ENCODE measurements at regions of chr1 and their contacts with region 1.

Region 1: GRCh38 chr1:26321315-26322041 is 3.7 kb downstream of the CD52 start:
- DNase-seq: peak; percentile 93
- ATAC-seq: peak; percentile 91 to 92

Region 2: DNA sequence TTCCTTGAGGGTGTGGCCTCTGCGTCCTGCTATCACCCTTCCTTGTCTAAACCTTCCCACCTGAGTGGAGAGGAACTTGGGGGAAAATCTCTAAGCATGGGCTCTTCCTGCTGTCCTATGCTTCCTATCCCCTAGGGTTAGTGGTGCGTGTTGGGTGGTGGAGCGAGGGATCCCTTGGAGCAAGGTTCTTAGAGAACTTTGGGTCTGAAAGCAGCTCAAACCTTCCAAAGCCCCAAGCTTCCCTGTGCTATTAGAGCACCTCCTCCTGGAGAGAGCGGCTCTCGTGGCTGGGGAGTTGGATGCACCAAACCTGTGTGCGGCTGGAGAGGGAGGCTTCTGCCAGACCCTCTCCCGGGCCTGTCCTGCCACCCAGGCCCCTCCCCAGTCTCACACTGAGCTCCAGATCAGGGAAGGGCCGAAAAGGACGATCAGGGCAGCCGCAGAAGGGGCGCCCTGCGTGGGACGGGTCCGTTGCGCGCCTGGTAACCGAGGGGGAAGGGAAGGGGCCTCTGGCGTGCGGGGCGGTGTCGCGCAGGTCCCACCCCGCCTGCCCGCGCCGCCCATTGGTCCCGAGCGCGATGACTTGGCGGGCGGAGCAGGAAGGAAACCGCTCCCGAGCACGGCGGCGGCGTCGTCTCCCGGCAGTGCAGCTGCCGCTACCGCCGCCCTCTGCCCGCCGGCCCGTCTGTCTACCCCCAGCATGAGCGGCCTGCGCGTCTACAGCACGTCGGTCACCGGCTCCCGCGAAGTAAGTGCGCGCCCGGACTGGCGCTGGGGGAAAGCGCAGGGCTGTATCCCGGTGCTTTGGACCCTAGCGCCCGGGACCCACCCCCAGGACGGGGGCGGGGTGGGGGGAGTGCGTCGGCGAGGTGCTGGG is 41.8 kb before region 1 on chr1 and contains the start of gene SH3BGRL3:
- intact Hi-C with region 1: loop called (anchors 2 to 10 kb)
- DNase-seq: peak; percentile 93
- ATAC-seq: peak; percentile 76 to 86
- total RNA-seq, gene SH3BGRL3: 90.6 to 93.9 TPM

Region 3: GRCh38 chr1:26284597-26285360 is 36.7 kb before region 1 on chr1:
- intact Hi-C with region 1: loop called (anchors 2 to 10 kb)
- DNase-seq: peak; percentile 91
- ATAC-seq: peak; percentile 36 to 39

Region 4: DNA sequence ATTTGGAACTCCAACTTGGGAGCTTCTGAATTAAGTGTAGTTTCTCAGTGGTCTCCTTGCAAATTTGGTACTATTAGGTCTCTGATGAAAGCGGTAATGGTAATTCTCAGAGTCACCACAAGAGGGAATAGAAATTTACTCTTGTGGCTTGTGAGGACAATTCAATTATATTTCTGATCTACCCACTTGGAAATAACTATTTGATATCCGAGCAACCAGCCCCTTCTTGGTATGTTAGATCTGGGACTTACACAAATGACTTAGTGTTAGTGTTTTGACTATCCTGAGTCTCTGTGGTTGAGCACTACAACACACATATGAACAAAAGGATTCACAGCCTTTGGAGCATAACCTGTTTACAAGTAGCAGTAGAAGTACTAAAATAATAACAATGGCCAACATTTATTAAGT is 276.2 kb after region 1 on chr1:
- intact Hi-C with region 1: no loop called
- DNase-seq: no peak
- ATAC-seq: no peak

Region 5: DNA sequence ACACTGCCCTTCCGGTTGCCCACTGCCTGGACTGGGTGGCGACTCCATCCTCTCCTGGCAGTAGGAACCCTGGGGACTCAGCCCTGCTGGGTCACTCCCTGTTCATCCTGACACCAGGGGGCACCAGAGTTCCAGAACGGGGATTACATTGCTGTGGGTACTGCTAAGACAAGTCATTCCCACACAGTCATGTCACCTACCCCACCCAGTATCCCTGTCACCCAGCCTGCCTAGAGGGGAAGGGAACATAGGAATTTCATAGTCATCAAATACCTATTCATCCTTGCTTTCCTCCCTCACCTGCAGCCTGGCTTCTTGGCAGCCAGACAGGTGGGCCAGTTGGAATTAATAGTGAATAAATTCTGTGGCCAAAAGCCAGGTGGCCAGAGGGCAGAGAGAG is 531.7 kb after region 1 on chr1:
- intact Hi-C with region 1: no loop called
- DNase-seq: peak; percentile 90
- ATAC-seq: peak; percentile 83 to 89